ENCODE measurements at regions of chr2 and their contacts with region 1.

Region 1: GRCh38 chr2:120287183-120288015 is 34.7 kb downstream of the RALB start:
- DNase-seq: no peak
- H3K4me3 ChIP-seq: no peak overlapping the region
- H3K27ac ChIP-seq: no peak overlapping the region
- H3K4me1 ChIP-seq: peaks cover 0 to 15% (median 14%) of the 10 kb centered on the region in 4 experiments
- H3K27me3 ChIP-seq: no peaks in the 10 kb centered on the region; a peak in 2 of 7 replicates
- CTCF ChIP-seq: no peak
- EP300 ChIP-seq: no peak
- POLR2A ChIP-seq: no peak
- RAD21 ChIP-seq: no peak

Region 2: GRCh38 chr2:120206022-120206581 is 81.3 kb before region 1 on chr2:
- CTCF ChIA-PET with region 1: interaction called, 10 read pairs
- POLR2A ChIA-PET with region 1: no interaction called
- DNase-seq: peak in 1 of 2 experiments; percentile 93
- H3K4me3 ChIP-seq: no peak overlapping the region
- H3K27ac ChIP-seq: no peak overlapping the region
- H3K4me1 ChIP-seq: no peaks in the 10 kb centered on the region; a peak in 1 of 7 replicates
- H3K27me3 ChIP-seq: no peaks in the 10 kb centered on the region; a peak in 1 of 7 replicates
- CTCF ChIP-seq: peak; percentile 90 to 96 (median 92)
- EP300 ChIP-seq: no peak
- POLR2A ChIP-seq: no peak
- RAD21 ChIP-seq: peak; percentile 75 to 86

Region 3: DNA sequence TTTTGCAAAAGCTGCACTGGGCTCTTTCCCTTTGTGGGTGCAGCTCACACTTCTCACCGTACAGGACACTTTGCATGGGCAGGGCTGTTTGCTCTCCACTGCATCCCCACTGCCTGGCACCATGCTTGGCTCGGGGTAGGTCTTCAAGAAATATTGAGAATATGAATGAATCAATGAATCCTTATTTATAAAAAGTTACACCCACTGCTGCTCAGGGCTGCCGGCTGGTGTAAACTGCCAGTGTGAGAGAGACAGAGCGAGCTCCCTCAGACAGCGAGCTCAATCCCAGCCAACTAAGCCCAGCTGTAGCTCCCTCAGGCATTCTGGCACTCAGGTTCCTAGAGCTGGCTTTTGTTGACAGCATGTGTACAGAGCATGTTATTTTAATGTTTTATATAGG is 67.6 kb before region 1 on chr2:
- CTCF ChIA-PET with region 1: interaction called, 12 read pairs
- POLR2A ChIA-PET with region 1: no interaction called
- DNase-seq: no peak
- H3K4me3 ChIP-seq: no peak overlapping the region
- H3K27ac ChIP-seq: no peak overlapping the region
- H3K4me1 ChIP-seq: peaks cover 0 to 7% (median 6%) of the 10 kb centered on the region in 4 experiments; a peak in 5 of 7 replicates
- H3K27me3 ChIP-seq: peaks cover 13 to 27% (median 25%) of the 10 kb centered on the region in 4 experiments
- CTCF ChIP-seq: no peak
- EP300 ChIP-seq: no peak
- POLR2A ChIP-seq: no peak
- RAD21 ChIP-seq: no peak

Region 4: GRCh38 chr2:120305296-120305695 is 17.9 kb after region 1 on chr2:
- CTCF ChIA-PET with region 1: interaction called, 75 read pairs
- POLR2A ChIA-PET with region 1: interaction called, 5 read pairs
- DNase-seq: no peak
- H3K4me3 ChIP-seq: no peak overlapping the region
- H3K27ac ChIP-seq: no peak overlapping the region
- H3K4me1 ChIP-seq: peaks cover 0 to 3% (median 0%) of the 10 kb centered on the region in 4 experiments; a peak in 3 of 7 replicates
- H3K27me3 ChIP-seq: peaks cover 0 to 8% (median 2%) of the 10 kb centered on the region in 4 experiments; a peak in 2 of 7 replicates
- CTCF ChIP-seq: peak; percentile 34 to 43 (median 36)
- EP300 ChIP-seq: no peak
- POLR2A ChIP-seq: no peak
- RAD21 ChIP-seq: peak; percentile 39 to 56; a peak in 3 of 4 replicates

Region 5: GRCh38 chr2:120352701-120353590 is 65.5 kb after region 1 on chr2:
- CTCF ChIA-PET with region 1: no interaction called
- POLR2A ChIA-PET with region 1: no interaction called
- DNase-seq: no peak
- H3K4me3 ChIP-seq: no peak overlapping the region
- H3K27ac ChIP-seq: no peak overlapping the region
- H3K4me1 ChIP-seq: peaks cover 7 to 24% (median 16%) of the 10 kb centered on the region in 4 experiments
- H3K27me3 ChIP-seq: peaks cover 11 to 50% (median 39%) of the 10 kb centered on the region in 4 experiments
- CTCF ChIP-seq: peak in 1 of 3 experiments; percentile 18; a peak in 2 of 4 replicates
- EP300 ChIP-seq: no peak
- POLR2A ChIP-seq: no peak
- RAD21 ChIP-seq: peak; percentile 20 to 21; a peak in 1 of 4 replicates

Measured in H1 (cell line).